Ascending aorta (tissue), 2 donors: ENCODE measurements at regions of chr3 and their contacts with region 1.

Region 1: DNA sequence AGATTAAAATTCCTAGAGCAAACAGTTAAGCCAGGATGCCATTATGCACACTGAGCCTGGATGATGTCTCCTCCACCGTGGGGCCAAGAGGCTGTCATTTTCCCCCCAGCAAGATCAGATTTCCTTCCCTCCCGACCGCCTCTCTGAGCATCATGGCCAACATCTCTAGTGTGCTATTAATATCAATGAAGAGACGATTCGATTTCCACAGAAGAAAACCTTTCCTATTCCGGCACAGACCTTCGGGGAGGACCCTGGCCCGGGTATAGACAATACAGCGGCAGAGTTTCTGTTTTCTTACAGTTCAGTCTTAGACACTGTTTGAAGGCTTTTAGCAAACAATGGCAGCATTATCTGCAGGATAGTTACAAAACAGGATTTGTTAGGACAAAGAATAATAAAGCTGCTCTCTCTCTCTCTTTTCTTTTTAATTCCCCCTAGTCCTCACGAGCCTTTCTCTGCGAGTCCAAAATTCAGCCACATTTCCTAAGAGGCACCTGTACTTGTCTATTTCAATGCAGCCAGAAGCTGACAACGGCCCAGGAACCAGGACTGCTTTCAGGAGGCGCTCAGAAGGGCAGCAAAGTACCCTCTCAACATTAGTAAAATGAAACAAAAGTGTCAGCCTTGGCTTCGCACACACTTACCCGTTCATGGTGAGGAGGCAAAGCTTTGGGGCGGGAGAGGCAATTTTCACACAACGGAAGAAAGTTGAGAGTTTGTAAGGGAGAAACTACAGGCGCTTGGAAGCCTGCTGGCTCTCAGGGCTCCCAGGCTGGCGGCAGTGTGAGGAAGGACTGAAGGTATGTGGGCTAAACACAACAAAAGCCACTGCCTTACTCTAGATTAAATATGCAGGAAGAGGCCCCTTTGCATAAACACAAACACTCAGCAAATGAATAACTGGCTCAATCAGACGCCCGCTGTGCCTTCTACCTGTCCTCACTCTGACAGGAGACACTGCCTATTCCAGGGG is 278.0 kb downstream of the FOXP1 start:
- DNase-seq: no peak
- H3K4me3 ChIP-seq: peak overlapping the region; percentile 27 to 62
- H3K27ac ChIP-seq: peak overlapping the region; percentile 68 to 74
- H3K4me1 ChIP-seq: peaks cover 0 to 24% of the 10 kb centered on the region in 2 donors
- H3K27me3 ChIP-seq: no peaks in the 10 kb centered on the region
- CTCF ChIP-seq: no peak

Region 2: GRCh38 chr3:70421506-70421905 is 884.0 kb before region 1 on chr3:
- intact Hi-C with region 1: no loop called
- DNase-seq: no peak
- H3K4me3 ChIP-seq: no peak overlapping the region
- H3K27ac ChIP-seq: no peak overlapping the region
- H3K4me1 ChIP-seq: no peaks in the 10 kb centered on the region
- H3K27me3 ChIP-seq: no peaks in the 10 kb centered on the region
- CTCF ChIP-seq: no peak

Region 3: GRCh38 chr3:70531063-70531657 is 774.4 kb before region 1 on chr3:
- intact Hi-C with region 1: loop called (anchors 5 kb)
- DNase-seq: no peak
- H3K4me3 ChIP-seq: no peak overlapping the region
- H3K27ac ChIP-seq: no peak overlapping the region
- H3K4me1 ChIP-seq: no peaks in the 10 kb centered on the region
- H3K27me3 ChIP-seq: no peaks in the 10 kb centered on the region
- CTCF ChIP-seq: peak; percentile 46 to 57 (median 48)

Region 4: DNA sequence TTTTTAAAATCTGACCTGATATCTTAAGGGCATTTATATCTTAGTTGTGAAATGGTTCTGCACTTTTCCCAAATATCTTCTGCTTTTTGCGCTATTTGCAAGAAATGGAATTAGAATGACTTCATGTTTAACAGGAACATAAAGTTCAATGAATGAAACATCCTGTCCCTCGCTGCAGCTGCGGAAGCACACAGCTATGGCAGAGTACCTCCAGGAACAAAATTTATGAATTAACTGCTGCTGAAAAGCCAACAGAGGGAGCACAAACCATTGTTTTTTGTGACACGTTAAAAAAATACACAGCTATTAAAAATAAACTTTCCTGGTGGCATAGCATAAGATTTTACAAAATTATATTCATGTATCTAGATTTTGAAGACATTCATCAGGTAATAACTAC is 588.7 kb before region 1 on chr3:
- intact Hi-C with region 1: loop called (anchors 2 kb)
- DNase-seq: no peak
- H3K4me3 ChIP-seq: no peak overlapping the region
- H3K27ac ChIP-seq: no peak overlapping the region
- H3K4me1 ChIP-seq: peaks cover 3 to 7% of the 10 kb centered on the region in 2 donors
- H3K27me3 ChIP-seq: no peaks in the 10 kb centered on the region
- CTCF ChIP-seq: peak; percentile 30 to 65 (median 52)

Region 5: DNA sequence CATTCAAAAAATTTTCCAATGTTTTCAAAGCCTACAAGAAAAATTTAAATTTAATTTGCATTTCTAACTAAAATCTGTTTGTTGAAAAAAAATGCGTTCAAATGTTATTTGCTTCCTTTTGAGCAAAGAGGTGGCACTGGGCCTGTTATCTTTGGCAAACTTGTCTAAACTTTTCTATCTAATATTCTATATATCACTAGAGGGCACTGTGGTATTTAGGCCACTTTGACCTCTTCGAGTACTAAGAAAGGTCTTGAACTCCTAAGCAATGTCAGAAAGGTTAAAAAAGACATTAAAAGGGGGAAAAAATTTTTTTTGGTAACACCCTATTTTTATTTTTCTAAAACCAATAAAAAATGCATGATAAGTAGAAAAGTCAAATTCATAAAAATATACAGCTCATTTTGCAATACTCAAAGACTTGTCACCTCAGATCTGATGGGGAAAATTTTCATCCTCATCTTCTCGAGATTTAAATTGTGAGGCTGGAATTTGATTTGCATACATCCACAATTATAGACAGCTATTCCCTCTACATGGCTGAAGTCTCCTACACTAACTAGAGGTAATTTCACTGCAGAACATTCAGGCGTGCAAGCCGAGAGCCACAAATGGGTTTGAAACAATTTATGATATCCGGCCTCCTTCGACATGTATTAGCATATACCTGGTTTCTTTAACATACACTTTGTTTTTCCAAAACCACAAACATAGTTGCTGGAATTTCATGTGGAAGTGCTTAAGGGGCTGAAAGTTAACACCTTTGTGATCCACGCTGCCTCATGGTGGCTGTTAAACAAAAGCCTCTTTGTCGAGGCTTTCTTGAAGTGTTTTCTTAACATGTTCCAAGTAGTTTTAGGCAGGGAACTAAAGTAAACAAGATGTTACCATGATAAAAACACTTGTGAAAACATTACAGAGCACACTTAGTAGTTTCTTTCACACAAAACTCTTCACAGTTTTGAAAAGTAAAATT is 298.4 kb before region 1 on chr3:
- intact Hi-C with region 1: loop called (anchors 10 kb)
- DNase-seq: no peak
- H3K4me3 ChIP-seq: peak overlapping the region in 1 of 2 donors; percentile 29
- H3K27ac ChIP-seq: peak overlapping the region; percentile 60 to 68
- H3K4me1 ChIP-seq: peaks cover 17 to 43% of the 10 kb centered on the region in 2 donors
- H3K27me3 ChIP-seq: no peaks in the 10 kb centered on the region
- CTCF ChIP-seq: peak in 2 of 3 experiments; percentile 26 to 35

Region 6: DNA sequence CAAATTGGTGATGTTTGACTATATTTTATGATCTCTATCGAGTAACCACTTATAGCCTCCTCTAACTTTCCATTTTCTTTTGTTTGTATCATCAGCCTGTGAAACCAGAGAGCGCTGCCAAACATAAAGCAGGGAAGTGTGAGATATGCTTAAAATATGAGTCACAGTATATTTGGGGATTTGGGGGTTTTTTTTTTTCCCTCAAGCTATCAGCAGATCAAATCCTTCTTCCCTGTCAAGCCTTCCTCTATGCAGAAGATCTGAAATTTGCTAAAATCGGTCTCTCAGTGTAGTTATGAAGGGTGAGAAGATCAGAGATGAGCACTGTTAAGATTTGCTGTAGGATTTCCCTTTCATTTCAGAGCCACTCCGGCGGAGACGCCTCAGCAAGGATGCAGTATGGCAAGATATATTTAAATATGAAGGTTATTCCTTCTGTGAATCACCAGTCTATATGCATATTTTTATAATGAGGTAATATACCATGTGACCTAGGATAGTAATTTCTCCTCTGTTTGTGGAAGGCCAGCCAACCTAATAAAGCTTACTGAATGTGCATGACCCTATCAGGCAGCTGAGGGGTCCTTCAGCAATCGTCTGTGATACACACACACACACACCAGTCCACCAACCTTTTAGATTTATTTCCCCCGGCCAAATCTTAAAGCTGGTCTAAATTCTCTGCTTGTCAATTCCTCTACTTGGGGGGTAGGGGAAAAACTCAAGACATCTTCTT is 196.1 kb before region 1 on chr3:
- intact Hi-C with region 1: no loop called
- DNase-seq: no peak
- H3K4me3 ChIP-seq: peak overlapping the region in 1 of 2 donors; percentile 22
- H3K27ac ChIP-seq: peak overlapping the region; percentile 72
- H3K4me1 ChIP-seq: peaks cover 0 to 76% of the 10 kb centered on the region in 2 donors
- H3K27me3 ChIP-seq: no peaks in the 10 kb centered on the region
- CTCF ChIP-seq: no peak

Region 7: DNA sequence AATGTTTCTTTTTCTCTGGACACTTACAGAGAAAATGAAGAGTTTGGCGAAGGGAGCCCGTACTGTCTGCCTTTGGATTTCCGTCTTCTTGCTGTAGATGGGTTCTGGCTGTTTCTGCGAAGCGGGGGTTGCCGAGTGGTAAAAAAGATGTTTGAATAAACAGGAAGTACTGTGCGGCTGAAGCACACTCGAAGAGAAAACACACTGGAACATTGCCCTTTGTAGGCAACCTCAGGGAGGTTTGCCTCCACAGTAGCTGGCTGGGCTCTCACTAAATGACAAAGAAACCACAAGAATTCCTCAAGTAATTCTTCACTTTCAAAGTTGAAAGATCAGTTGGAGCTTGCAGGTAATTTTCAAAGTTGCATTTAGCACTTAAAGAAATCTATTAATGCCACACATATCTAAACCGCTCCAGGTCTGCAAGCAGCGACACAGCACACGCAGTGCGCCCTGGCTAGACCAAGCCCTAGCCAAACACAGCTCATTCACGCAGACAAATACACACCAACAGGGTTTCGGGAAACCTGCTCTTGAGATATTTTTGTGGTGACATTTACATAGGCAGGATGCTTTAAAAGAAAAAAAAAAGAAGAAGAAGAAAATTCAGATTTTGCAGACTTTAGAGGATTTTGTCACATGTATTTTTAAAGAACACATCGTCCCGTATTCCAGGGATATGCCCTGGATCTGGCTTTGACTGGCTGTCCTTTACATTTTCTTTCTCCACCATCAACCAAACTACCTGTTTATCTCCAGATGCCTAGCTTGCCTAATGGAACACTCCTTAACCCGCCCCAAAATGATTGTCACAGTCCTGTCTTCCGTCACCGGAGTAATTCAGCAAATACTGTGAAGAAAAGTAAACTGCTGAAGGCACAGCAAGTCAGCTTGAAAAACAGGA is 174.8 kb before region 1 on chr3:
- intact Hi-C with region 1: loop called (anchors 2 kb)
- DNase-seq: peak in 1 of 2 donors; percentile 85
- H3K4me3 ChIP-seq: peak overlapping the region; percentile 49 to 73
- H3K27ac ChIP-seq: peak overlapping the region; percentile 85 to 90
- H3K4me1 ChIP-seq: peaks cover 2 to 36% of the 10 kb centered on the region in 2 donors
- H3K27me3 ChIP-seq: no peaks in the 10 kb centered on the region
- CTCF ChIP-seq: no peak

Region 8: DNA sequence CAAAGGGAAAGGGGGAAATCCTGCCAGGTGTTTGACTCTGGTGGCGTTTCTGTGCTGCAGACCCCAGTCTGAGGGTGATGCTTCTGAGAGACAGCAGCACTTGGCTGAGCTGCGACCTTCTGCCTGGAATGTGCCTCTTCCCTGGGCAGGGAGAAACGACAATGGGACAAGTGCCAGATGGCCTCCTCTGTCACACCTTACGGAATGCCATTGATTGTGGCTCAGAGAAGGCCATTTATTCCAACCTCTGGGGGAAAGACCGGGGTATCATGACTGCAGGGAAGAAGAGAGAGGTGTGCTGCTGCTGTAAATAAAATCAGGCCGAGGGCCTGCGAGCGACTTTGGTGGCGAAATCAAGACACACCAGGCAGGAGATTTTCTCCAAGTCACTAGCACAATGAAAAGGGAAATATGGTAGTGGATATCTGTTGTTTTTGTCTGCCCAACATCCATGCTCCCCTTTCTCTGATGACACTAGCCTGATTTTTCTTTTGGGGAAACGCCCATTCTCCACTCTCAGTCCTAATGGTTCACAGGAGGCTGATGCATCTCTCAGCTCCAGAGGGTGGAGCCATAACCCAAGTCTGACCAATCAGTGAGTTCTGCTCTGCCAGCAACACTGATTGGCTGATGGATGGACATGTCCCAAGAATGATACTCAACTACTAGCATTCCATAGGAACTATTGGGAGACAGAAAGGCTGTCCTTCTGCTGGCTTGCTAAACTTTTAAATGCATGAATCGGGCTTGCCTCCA is 58.1 kb before region 1 on chr3:
- intact Hi-C with region 1: loop called (anchors 5 kb)
- DNase-seq: peak in 1 of 2 donors; percentile 58
- H3K4me3 ChIP-seq: no peak overlapping the region
- H3K27ac ChIP-seq: peak overlapping the region; percentile 69 to 86
- H3K4me1 ChIP-seq: peaks cover 0 to 21% of the 10 kb centered on the region in 2 donors
- H3K27me3 ChIP-seq: no peaks in the 10 kb centered on the region
- CTCF ChIP-seq: no peak